RWPE1 (cell line): ENCODE measurements at regions of chr11 and their contacts with region 1.

Region 1: DNA sequence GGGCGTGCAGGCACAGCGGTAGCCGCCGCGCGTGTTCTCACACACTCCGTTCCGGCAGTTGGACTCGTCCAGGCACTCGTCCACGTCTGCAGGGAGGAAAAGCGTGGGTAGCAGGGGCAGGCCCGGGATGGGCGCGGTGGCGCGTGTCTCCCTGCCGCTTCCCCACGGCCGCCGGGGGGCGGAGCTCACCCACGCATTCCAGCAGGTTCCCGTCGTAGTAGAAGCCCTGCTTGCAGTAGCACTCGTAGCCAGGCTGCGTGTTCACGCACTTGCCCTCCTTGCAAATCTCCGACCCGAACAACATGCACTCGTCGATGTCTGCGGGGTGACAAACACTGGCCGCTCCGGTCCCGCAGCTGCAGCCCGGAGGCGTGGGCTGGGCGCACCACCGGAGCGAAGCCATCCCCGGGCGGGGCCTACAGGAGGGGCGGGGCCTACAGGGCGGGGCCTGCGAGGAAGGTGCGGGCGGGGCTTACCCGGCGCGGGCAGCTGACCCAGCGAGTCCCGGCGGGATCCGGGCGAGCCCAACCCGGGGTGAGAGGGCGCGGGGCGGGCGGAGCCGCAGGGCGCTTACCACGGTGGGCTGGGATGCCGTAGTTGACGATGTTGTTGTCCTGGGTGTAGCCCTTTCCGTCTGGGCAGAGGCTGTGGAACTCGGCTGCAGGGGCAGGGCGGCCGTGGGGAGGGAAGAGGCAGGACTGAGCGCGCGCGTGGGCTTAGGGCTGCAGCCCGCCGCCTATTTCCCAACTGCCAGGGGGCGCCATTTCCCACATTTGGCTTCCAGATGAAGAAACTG is 15.6 kb downstream of the SCYL1 start:
- DNase-seq: peak; percentile 95
- H3K27ac ChIP-seq: peak overlapping the region; percentile 94
- CTCF ChIP-seq: peak; percentile 73

Region 2: DNA sequence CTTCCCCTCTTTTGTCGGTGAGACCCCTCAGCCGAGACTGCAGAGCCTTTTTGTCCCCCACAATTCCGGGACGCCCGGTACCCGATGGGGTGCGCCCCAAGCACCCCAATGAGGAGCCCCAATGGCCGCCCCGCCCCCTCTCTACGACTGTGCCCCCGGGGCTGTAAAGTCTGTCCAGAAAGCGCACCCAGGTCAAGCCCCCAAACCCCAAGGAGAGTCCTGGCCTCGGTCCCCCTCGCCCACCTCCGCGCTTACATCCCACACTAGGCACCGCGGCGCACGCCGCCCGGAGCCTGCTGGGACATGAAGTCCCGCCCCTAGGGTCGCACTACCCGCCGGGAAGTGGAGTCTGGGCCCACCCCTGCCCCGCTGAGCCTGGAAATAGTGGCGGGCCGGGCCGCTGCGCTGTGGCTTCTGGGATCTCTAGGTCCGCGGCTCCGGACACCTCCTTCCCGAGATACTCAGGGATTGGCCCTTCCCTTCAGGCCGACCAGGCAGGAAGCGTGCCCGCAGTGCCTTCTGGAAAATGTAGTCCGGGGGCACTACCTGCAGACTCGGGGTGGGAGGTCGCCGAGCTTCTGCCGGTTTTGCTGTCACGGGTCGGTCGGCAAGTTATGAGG is 730.1 kb before region 1 on chr11 and contains the start of gene MEN1:
- CTCF ChIA-PET with region 1: no interaction called
- POLR2A ChIA-PET with region 1: no interaction called
- DNase-seq: peak; percentile 94
- H3K27ac ChIP-seq: peak within 1 kb of the TSS; percentile 80
- CTCF ChIP-seq: no peak

Region 3: GRCh38 chr11:65551572-65552398 is 11.3 kb after region 1 on chr11:
- CTCF ChIA-PET with region 1: interaction called, 15 read pairs
- POLR2A ChIA-PET with region 1: interaction called, 3 read pairs
- DNase-seq: no peak
- H3K27ac ChIP-seq: no peak overlapping the region
- CTCF ChIP-seq: peak; percentile 54; the same call in 1 of the 2 replicates

Region 4: DNA sequence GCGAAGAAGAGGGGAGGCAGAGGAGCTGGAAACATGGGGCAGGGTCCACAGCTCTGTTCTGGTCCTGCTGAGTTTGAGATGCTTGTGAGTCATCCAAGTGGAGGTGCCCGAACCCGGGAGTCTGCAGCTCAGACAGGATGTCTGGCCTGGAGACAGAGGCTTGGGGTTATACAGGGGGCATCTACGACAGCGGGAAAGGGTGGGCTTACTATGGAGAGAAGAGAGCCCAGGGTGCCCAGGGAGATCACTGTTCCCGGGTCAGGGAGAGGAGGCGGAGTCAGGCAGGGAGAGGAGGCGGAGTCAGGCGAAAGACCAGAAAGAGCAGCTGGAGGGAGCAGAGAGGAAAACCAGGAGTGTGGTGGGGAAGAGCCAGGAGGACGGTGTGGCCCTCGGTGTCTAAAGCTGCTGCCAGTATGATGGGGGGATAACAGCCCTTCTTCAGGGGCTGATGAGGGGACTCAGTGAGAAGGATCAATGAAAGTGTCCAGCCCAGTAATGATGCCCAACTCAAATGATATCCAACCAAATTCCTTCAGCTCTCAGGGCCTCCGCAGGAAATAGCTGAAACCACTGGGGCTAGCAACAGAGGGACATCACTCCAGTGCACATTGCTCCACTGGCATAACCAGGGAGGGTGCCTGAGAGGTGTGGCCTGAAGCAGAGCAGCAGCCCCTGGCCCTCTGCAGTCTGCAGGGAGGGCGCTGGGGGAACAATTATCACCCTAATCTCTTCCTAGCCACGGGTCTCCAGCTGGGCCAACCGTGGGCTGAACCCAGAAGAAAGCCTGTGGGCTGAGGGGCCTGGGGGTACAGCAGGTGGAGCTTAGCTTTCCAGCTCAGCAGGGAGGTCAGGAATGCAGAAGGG is 20.3 kb after region 1 on chr11:
- CTCF ChIA-PET with region 1: interaction called, 17 read pairs
- POLR2A ChIA-PET with region 1: interaction called, 4 read pairs
- DNase-seq: no peak
- H3K27ac ChIP-seq: peak overlapping the region; percentile 86
- CTCF ChIP-seq: no peak

Region 5: DNA sequence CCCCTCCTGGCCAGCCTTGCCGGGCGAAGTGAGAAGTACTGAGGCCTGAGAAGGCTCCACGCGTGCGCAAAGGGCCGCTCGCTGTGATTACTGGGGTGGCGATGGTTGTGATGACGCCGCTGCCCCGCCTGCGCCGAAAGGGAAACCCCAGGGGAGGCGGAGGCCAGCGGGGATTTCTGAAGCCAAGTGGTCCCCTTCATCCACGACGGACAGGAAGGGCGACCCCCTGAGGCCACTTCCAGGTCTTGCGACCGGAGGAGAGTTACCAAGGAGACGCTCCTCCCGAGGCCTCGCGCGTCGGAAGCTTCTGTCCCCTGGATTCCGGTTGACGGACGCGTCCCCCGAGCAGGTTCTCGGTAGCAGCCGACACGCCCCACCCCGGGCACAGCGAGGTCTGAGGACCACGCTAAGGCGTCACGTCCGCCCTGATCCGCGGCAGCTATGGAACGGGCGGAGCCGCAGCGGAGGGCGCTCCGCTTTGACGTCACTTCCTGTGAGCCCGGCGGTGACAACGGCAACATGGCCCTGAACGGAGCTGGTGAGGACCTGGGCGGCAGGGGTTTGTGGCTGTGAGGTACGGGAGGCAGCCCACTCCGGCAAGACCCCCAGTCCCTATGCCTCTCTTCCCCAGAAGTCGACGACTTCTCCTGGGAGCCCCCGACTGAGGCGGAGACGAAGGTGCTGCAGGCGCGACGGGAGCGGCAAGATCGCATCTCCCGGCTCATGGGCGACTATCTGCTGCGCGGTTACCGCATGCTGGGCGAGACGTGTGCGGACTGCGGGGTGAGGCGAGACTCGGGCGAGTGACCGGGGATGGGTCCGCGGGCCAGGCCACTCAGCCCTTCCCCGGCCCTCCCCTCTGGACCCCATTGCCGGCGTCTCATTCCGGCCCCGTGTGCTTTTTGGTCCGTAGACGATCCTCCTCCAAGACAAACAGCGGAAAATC is 29.8 kb after region 1 on chr11 and contains the start of gene ZNRD2:
- CTCF ChIA-PET with region 1: interaction called, 95 read pairs
- POLR2A ChIA-PET with region 1: interaction called, 16 read pairs
- DNase-seq: peak; percentile 94
- H3K27ac ChIP-seq: peak within 1 kb of the TSS; percentile 98
- CTCF ChIP-seq: peak; percentile 71

Region 6: GRCh38 chr11:65576867-65577769 is 36.6 kb after region 1 on chr11:
- CTCF ChIA-PET with region 1: interaction called, 95 read pairs
- POLR2A ChIA-PET with region 1: interaction called, 16 read pairs
- DNase-seq: peak; percentile 91
- H3K27ac ChIP-seq: peak overlapping the region; percentile 98
- CTCF ChIP-seq: no peak

Region 7: GRCh38 chr11:65593518-65594298 is 53.2 kb after region 1 on chr11:
- CTCF ChIA-PET with region 1: interaction called, 13 read pairs
- POLR2A ChIA-PET with region 1: no interaction called
- DNase-seq: no peak
- H3K27ac ChIP-seq: peak overlapping the region; percentile 67
- CTCF ChIP-seq: peak; percentile 69

Region 8: GRCh38 chr11:66242095-66242765 is 701.7 kb after region 1 on chr11:
- CTCF ChIA-PET with region 1: no interaction called
- POLR2A ChIA-PET with region 1: no interaction called
- DNase-seq: no peak
- H3K27ac ChIP-seq: peak overlapping the region; percentile 8; the same call in 1 of the 2 replicates
- CTCF ChIP-seq: no peak